ENCODE measurements at regions of chr22 and their contacts with region 1.

Region 1: GRCh38 chr22:37696657-37697537 is at the start of gene TRIOBP:
- DNase-seq: peak; percentile 91 to 98 (median 96)
- ATAC-seq: peak; percentile 99
- H3K4me3 ChIP-seq: no peak within 1 kb of the TSS
- H3K27ac ChIP-seq: peak within 1 kb of the TSS in 1 of 4 donors; percentile 49
- H3K4me1 ChIP-seq: peaks cover 14% of the 10 kb centered on the region
- H3K27me3 ChIP-seq: no peaks in the 10 kb centered on the region
- CTCF ChIP-seq: peak in 6 of 7 experiments; percentile 11 to 70 (median 60)
- POLR2A ChIP-seq: no peak
- total RNA-seq, gene TRIOBP: 65.6 to 76.5 TPM

Region 2: GRCh38 chr22:37345863-37346504 is 350.9 kb before region 1 on chr22:
- intact Hi-C with region 1: no loop called
- DNase-seq: no peak
- ATAC-seq: no peak
- H3K4me3 ChIP-seq: no peak overlapping the region
- H3K27ac ChIP-seq: no peak overlapping the region
- H3K4me1 ChIP-seq: no peaks in the 10 kb centered on the region
- H3K27me3 ChIP-seq: no peaks in the 10 kb centered on the region
- CTCF ChIP-seq: no peak
- POLR2A ChIP-seq: no peak

Region 3: GRCh38 chr22:37538590-37539357 is 158.1 kb before region 1 on chr22:
- intact Hi-C with region 1: loop called (anchors 10 kb)
- DNase-seq: peak; percentile 95 to 97 (median 96)
- ATAC-seq: peak; percentile 96
- H3K4me3 ChIP-seq: no peak overlapping the region
- H3K27ac ChIP-seq: peak overlapping the region in 2 of 4 donors; percentile 40 to 44
- H3K4me1 ChIP-seq: peaks cover 33% of the 10 kb centered on the region
- H3K27me3 ChIP-seq: no peaks in the 10 kb centered on the region
- CTCF ChIP-seq: peak; percentile 92 to 100 (median 100)
- POLR2A ChIP-seq: peak in 1 of 3 donors; percentile 21